Activated CD4-positive, alpha-beta memory T cell treated with anti-CD3 and anti-CD28 coated beads for 36 hours (primary cell): ENCODE measurements at regions of chr1 and their contacts with region 1.

Region 1: DNA sequence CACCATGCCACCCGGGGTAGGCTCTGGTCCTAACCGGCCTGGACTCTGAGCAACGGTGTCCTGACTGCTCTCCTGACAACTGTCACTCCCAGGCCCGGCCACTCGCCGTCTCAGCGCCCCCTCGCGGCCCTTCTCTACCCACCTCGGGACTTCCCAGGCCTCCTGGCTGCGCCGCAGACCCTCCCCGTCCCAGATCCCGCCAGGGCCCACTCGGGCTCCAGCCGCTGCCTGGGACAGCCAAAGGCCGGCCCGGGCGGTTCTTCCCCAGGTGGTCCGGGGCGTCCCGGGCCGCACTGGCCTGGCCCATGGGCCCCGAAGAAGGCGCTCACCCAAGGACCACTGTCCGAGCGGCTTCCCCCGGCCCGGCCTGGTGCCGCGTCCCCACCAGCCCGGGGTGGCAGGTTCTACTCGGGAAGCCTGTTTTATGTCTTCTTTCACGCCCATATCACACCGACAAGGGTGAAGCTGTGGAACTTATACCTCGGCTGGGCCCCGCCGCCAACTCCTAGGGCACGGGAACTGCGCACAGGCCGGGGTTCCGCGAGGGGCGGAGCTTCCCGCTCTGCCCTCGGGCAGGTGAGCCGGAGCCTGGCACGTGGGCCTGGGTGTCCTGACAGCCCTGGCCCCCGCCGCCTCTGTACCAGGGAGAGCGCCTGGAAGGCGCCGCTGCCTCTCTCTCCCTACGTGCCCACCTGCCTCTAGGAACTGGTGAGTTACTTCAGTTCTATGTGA is 138.3 kb downstream of the TTLL7 start:
- DNase-seq: peak; percentile 85
- H3K4me3 Mint-ChIP-seq: peak overlapping the region; percentile 61
- H3K27ac Mint-ChIP-seq: no peak overlapping the region
- H3K4me1 Mint-ChIP-seq: peaks cover 8% of the 10 kb centered on the region
- H3K27me3 Mint-ChIP-seq: no peaks in the 10 kb centered on the region

Region 2: GRCh38 chr1:83508485-83509151 is 352.0 kb before region 1 on chr1:
- CTCF ChIA-PET with region 1: no interaction called
- POLR2A ChIA-PET with region 1: no interaction called
- intact Hi-C with region 1: loop called (anchors 10 kb)
- DNase-seq: peak; percentile 57
- H3K4me3 Mint-ChIP-seq: peak overlapping the region; percentile 33
- H3K27ac Mint-ChIP-seq: peak overlapping the region; percentile 82
- H3K4me1 Mint-ChIP-seq: peaks cover 35% of the 10 kb centered on the region
- H3K27me3 Mint-ChIP-seq: no peaks in the 10 kb centered on the region

Region 3: DNA sequence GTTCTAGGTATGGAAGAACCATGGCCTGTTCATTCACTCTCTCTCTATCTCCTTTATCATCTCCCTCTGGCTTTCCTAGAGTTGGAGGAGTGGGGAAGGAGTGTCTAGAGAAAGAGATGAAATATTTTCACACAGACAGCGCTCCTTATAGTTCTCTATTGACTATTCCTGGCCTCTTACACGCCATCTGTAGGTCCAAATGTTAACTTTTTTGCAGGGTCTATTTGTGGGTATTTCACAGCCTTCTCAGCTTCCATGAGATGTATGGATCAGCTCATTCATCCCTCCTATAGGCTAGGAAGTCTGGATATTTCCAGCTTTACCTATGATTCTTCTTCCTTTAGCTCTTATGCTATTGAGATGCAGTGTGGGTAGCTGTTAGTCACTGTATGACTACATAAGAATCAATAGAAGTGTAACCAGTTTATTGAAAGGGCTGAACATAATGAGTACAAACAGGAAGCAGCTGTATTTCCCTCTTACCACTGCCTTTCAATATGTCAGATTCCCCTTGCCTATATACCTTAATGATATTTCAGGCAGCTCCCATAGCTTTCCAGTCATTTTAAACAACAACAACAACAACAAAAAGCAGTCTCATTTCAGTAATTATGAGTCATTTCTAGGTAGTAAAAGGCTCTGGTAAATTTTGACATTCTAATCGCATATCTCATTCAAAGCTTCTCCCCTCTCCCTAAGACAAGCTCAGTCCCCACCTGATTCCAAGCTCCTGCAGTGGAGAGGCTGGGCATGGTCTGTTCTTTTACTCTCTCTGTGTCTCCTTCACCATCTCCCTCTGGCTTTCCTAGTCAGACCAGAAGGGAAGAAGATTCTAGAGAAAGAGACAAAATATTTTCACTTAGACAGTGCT is 11.2 kb before region 1 on chr1:
- CTCF ChIA-PET with region 1: interaction called, 10 read pairs
- POLR2A ChIA-PET with region 1: no interaction called
- intact Hi-C with region 1: no loop called
- DNase-seq: no peak
- H3K4me3 Mint-ChIP-seq: no peak overlapping the region
- H3K27ac Mint-ChIP-seq: no peak overlapping the region
- H3K4me1 Mint-ChIP-seq: peaks cover 4% of the 10 kb centered on the region
- H3K27me3 Mint-ChIP-seq: no peaks in the 10 kb centered on the region

Region 4: DNA sequence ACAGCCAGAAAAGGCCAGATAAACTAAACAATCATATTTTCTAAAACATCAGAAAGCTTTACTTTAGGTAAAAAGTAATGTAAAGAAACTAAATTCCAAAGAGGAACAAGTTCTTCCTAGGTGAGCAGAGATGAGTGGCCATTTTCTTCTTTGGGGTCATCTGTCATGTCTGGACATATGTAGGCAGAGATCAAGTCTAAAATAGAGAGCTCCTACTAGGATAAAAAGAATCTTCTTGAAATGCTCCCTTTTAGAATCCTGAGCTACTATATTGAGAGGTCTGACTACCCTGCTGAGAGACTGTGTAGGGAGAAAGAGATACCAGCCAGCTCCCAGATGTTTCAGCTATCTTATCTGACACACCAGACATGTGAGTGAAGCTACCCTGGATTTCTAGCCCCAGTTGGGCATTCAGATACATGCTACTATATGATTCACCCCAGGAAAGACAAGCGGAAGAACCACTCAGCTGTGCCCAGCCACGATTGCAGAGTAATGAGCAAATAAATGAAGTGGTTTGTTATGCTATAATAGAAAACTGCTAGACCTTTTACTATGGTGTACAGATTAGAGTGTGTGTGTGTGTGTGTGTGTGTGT is 58.1 kb after region 1 on chr1:
- CTCF ChIA-PET with region 1: no interaction called
- POLR2A ChIA-PET with region 1: no interaction called
- intact Hi-C with region 1: no loop called
- DNase-seq: no peak
- H3K4me3 Mint-ChIP-seq: no peak overlapping the region
- H3K27ac Mint-ChIP-seq: no peak overlapping the region
- H3K4me1 Mint-ChIP-seq: no peaks in the 10 kb centered on the region
- H3K27me3 Mint-ChIP-seq: peaks cover 14% of the 10 kb centered on the region